ENCODE measurements at regions of chr7 and their contacts with region 1.

Region 1: GRCh38 chr7:105678811-105679495 is 97.7 kb upstream of the EFCAB10 start:
- DNase-seq: peak; percentile 60
- H3K4me3 Mint-ChIP-seq: peak overlapping the region; percentile 82
- H3K27ac Mint-ChIP-seq: peak overlapping the region; percentile 86
- H3K4me1 Mint-ChIP-seq: peaks cover 59% of the 10 kb centered on the region
- H3K27me3 Mint-ChIP-seq: no peaks in the 10 kb centered on the region

Region 2: GRCh38 chr7:105512415-105512814 is 166.5 kb before region 1 on chr7:
- CTCF ChIA-PET with region 1: no interaction called
- intact Hi-C with region 1: no loop called
- DNase-seq: no peak
- H3K4me3 Mint-ChIP-seq: no peak overlapping the region
- H3K27ac Mint-ChIP-seq: peak overlapping the region; percentile 64
- H3K4me1 Mint-ChIP-seq: peaks cover 31% of the 10 kb centered on the region
- H3K27me3 Mint-ChIP-seq: no peaks in the 10 kb centered on the region

Region 3: GRCh38 chr7:105621617-105622016 is 57.3 kb before region 1 on chr7:
- CTCF ChIA-PET with region 1: no interaction called
- intact Hi-C with region 1: no loop called
- DNase-seq: no peak
- H3K4me3 Mint-ChIP-seq: no peak overlapping the region
- H3K27ac Mint-ChIP-seq: no peak overlapping the region
- H3K4me1 Mint-ChIP-seq: no peaks in the 10 kb centered on the region
- H3K27me3 Mint-ChIP-seq: no peaks in the 10 kb centered on the region

Region 4: GRCh38 chr7:105924945-105925344 is 246.0 kb after region 1 on chr7:
- CTCF ChIA-PET with region 1: no interaction called
- intact Hi-C with region 1: loop called (anchors 1 kb)
- DNase-seq: peak; percentile 60
- H3K4me3 Mint-ChIP-seq: no peak overlapping the region
- H3K27ac Mint-ChIP-seq: peak overlapping the region; percentile 9
- H3K4me1 Mint-ChIP-seq: peaks cover 26% of the 10 kb centered on the region
- H3K27me3 Mint-ChIP-seq: peaks cover 2% of the 10 kb centered on the region

Region 5: GRCh38 chr7:106112117-106112971 is 433.4 kb after region 1 on chr7 and contains the start of gene SYPL1:
- CTCF ChIA-PET with region 1: no interaction called
- intact Hi-C with region 1: loop called (anchors 5 kb)
- DNase-seq: peak; percentile 94
- H3K4me3 Mint-ChIP-seq: peak within 1 kb of the TSS; percentile 85
- H3K27ac Mint-ChIP-seq: peak within 1 kb of the TSS; percentile 92
- H3K4me1 Mint-ChIP-seq: peaks cover 71% of the 10 kb centered on the region
- H3K27me3 Mint-ChIP-seq: no peaks in the 10 kb centered on the region
- total RNA-seq, gene SYPL1: 24.7 to 26.6 TPM

Measured in activated naive CD4-positive, alpha-beta T cell treated with anti-CD3 and anti-CD28 coated beads for 36 hours (primary cell).